ENCODE measurements at regions of chr1 and their contacts with region 1.

Region 1: GRCh38 chr1:24830680-24831272 is 85.5 kb downstream of the CLIC4 start:
- DNase-seq: peak in 1 of 2 donors; percentile 19
- ATAC-seq: peak in 7 of 8 donors; percentile 72 to 85 (median 77)
- H3K4me3 ChIP-seq: no peak overlapping the region
- H3K27ac ChIP-seq: peak overlapping the region in 1 of 10 donors; percentile 23
- H3K4me1 ChIP-seq: peaks cover 3 to 67% (median 61%) of the 10 kb centered on the region in 9 donors
- H3K27me3 ChIP-seq: no peaks in the 10 kb centered on the region
- CTCF ChIP-seq: peak; percentile 75 to 95 (median 81)

Region 2: DNA sequence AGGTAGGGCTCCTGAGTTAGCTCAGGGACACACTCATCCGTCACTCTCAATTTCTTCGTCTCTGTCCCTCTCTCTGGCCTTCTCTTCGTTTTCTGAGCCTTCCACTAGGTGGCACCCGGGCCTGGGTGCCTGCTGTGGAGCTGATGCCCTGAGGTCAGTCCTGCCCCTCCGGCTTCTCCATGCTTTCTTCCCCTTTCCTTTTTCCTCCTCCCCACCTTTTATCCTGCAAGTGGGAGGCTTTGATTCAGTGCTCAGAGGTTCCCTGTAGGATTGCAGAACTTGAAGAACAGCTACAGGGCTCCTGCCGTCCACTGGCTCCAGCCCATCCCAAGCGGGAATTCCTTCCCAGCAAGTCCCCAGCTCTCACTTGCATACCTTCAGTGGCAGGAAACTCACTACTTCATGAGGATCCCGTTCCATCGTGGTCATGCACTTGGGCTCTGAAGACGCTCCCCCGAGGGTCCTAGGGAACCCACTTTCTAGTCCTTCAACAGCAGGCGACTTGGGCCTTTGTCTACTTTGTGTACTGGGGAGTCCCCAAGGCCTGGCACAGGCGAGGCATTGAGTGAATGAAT is 142.1 kb before region 1 on chr1:
- intact Hi-C with region 1: loop called (anchors 2 to 5 kb)
- DNase-seq: peak; percentile 72 to 78
- ATAC-seq: peak; percentile 78 to 94 (median 91)
- H3K4me3 ChIP-seq: no peak overlapping the region
- H3K27ac ChIP-seq: peak overlapping the region in 7 of 10 donors; percentile 3 to 44 (median 28)
- H3K4me1 ChIP-seq: peaks cover 0 to 33% (median 20%) of the 10 kb centered on the region in 9 donors
- H3K27me3 ChIP-seq: no peaks in the 10 kb centered on the region
- CTCF ChIP-seq: peak; percentile 76 to 94 (median 88)

Region 3: GRCh38 chr1:24786191-24786590 is 44.6 kb before region 1 on chr1:
- intact Hi-C with region 1: loop called in 2 of 10 experiments (anchors 5 kb)
- DNase-seq: no peak
- ATAC-seq: peak in 6 of 8 donors; percentile 48 to 66 (median 59)
- H3K4me3 ChIP-seq: no peak overlapping the region
- H3K27ac ChIP-seq: peak overlapping the region in 4 of 10 donors; percentile 0 to 47 (median 5)
- H3K4me1 ChIP-seq: peaks cover 0 to 49% (median 35%) of the 10 kb centered on the region in 9 donors
- H3K27me3 ChIP-seq: no peaks in the 10 kb centered on the region
- CTCF ChIP-seq: no peak

Region 4: DNA sequence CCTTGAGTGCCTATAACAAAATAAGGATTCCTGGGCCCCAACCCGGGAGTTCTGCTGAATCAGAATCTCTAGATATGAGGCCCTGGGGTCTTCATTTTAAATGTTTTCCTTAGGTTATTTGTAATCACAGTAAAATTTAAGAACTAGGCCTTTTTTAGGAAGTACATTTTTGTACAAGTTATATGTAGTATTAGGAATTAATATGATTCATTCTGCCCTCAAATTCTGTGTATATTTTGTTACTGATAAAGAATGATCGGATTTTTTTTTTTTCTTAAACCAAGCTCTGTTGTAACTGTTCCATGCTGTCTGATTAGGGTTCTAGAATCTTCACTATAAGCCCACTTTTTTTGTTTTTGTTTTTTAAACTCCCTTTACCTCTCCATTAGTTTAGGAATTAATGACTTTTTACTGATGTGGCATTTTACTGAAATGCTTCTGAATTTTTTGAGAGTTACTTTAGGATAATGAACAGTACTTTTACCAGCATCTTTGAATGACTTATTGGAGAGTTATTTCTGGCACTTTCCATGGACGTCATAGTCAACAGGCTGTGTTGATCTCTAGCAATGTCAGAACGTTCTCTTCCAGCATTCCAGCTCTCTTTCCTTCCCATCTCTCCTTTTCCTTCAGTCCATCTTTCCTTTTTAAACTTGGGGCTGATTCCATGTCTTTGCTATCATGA is 37.2 kb before region 1 on chr1:
- intact Hi-C with region 1: loop called in 2 of 10 experiments (anchors 5 kb)
- DNase-seq: peak in 1 of 2 donors; percentile 22
- ATAC-seq: peak; percentile 44 to 96 (median 83)
- H3K4me3 ChIP-seq: no peak overlapping the region
- H3K27ac ChIP-seq: peak overlapping the region; percentile 54 to 83 (median 68)
- H3K4me1 ChIP-seq: peaks cover 3 to 71% (median 36%) of the 10 kb centered on the region in 9 donors
- H3K27me3 ChIP-seq: no peaks in the 10 kb centered on the region
- CTCF ChIP-seq: no peak